SK-N-SH (cell line): ENCODE measurements at regions of chr16 and their contacts with region 1.

Region 1: GRCh38 chr16:68811503-68811902 is 31.8 kb upstream of the TANGO6 start:
- DNase-seq: no peak
- H3K4me3 ChIP-seq: no peak overlapping the region
- H3K27ac ChIP-seq: no peak overlapping the region
- H3K4me1 ChIP-seq: no peaks in the 10 kb centered on the region
- H3K27me3 ChIP-seq: no peaks in the 10 kb centered on the region; the same call in 1 of the 2 replicates
- CTCF ChIP-seq: no peak
- EP300 ChIP-seq: no peak
- RAD21 ChIP-seq: no peak

Region 2: GRCh38 chr16:68800257-68800875 is 11.1 kb before region 1 on chr16:
- CTCF ChIA-PET with region 1: interaction called, 22 read pairs
- POLR2A ChIA-PET with region 1: no interaction called
- DNase-seq: peak; percentile 71
- H3K4me3 ChIP-seq: no peak overlapping the region
- H3K27ac ChIP-seq: no peak overlapping the region
- H3K4me1 ChIP-seq: no peaks in the 10 kb centered on the region
- H3K27me3 ChIP-seq: no peaks in the 10 kb centered on the region; the same call in 1 of the 2 replicates
- CTCF ChIP-seq: peak; percentile 65
- EP300 ChIP-seq: no peak
- RAD21 ChIP-seq: peak; percentile 86

Region 3: DNA sequence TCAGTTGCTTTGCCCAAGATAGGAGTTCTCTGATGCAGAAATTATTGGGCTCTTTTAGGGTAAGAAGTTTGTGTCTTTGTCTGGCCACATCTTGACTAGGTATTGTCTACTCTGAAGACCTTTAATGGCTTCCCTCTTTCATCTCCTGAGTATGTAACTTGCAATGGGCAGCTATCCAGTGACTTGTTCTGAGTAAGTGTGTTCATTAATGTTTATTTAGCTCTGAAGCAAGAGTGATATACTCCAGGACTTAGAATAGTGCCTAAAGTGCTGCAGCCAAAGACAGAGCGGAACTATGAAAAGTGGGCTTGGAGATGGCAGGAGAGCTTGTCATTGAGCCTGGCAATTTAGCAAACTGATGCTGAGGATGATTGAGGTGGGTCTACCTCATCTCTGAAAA is 23.0 kb after region 1 on chr16:
- CTCF ChIA-PET with region 1: no interaction called
- POLR2A ChIA-PET with region 1: no interaction called
- DNase-seq: no peak
- H3K4me3 ChIP-seq: no peak overlapping the region
- H3K27ac ChIP-seq: no peak overlapping the region
- H3K4me1 ChIP-seq: no peaks in the 10 kb centered on the region
- H3K27me3 ChIP-seq: no peaks in the 10 kb centered on the region; the same call in 1 of the 2 replicates
- CTCF ChIP-seq: no peak
- EP300 ChIP-seq: no peak
- RAD21 ChIP-seq: no peak

Region 4: GRCh38 chr16:68893710-68894705 is 82.5 kb after region 1 on chr16:
- CTCF ChIA-PET with region 1: no interaction called
- POLR2A ChIA-PET with region 1: no interaction called
- DNase-seq: no peak
- H3K4me3 ChIP-seq: no peak overlapping the region
- H3K27ac ChIP-seq: no peak overlapping the region
- H3K4me1 ChIP-seq: no peaks in the 10 kb centered on the region
- H3K27me3 ChIP-seq: no peaks in the 10 kb centered on the region
- CTCF ChIP-seq: no peak
- EP300 ChIP-seq: no peak
- RAD21 ChIP-seq: no peak